GM18951 (cell line): ENCODE measurements at regions of chr3 and their contacts with region 1.

Region 1: DNA sequence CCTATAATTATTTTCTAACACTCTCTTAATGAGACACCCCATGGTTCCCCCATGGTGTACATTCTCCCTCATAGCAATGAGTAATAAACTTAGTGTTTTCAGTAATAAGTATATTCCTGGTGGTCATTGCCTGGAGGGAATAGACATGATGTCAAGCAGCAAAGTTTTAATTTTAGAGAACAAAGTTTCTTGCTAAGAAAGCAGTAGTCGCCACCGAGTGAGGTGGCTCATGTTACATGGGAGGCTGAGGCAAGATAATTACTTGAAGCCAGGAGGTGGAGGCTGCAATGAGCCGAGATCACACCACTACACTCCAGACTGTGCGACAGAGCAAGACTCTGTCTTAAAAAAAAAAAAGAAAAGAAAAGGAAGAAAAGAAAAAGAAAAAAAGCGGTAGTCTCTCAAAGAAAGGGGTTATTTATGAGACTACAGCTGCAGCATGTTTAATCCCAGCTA is 2.4 kb upstream of the ELP6 start:
- POLR2A ChIP-seq: no peak

Region 2: GRCh38 chr3:47781685-47782445 is 266.0 kb after region 1 on chr3 and contains the start of gene SMARCC1:
- in situ Hi-C with region 1: loop called (anchors 5 kb)
- POLR2A ChIP-seq: peak; percentile 92